GM12878 (cell line): ENCODE measurements at regions of chr19 and their contacts with region 1.

Region 1: DNA sequence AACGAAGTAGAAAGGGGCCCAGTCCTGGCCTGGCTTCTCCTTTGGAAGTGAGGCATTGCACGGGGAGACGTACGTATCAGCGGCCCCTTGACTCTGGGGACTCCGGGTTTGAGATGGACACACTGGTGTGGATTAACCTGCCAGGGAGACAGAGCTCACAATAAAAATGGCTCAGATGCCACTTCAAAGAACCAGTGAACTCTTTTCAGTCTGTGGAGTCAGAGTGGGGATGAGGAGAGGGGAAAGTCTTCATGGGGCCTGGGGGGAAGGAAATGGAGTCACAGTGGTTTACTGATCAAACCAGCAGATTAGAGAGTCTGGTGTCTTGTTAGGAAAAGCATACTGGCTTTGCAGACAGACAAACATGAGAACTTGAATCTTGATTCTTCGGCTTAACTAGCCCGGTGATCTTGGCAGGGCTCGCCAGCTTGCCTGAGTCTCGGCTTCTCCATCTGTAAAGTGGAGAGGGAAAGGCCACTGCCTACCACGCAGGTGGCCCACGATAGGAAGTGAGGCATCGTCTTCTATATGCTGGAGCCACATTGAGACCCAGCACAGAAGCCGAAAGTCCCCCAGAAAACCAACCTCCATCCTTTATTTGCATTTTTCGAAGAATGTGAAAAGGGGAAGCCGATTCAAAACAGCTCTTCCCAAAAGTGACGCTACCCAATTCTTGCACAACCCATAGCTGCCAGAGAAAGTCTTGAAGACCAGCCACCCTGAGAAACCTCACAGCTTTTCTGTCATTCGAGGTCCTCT is at the start of gene FFAR1:
- DNase-seq: peak; percentile 96
- ATAC-seq: peak; percentile 74
- H3K4me3 ChIP-seq: no peak within 1 kb of the TSS; the same call in 1 of the 2 replicates
- H3K27ac ChIP-seq: peak within 1 kb of the TSS; percentile 97
- H3K4me1 ChIP-seq: peaks cover 56% of the 10 kb centered on the region
- H3K27me3 ChIP-seq: no peaks in the 10 kb centered on the region
- CTCF ChIP-seq: no peak
- EP300 ChIP-seq: peak in 1 of 2 experiments; percentile 66; a peak in 2 of 4 replicates
- POLR2A ChIP-seq: peak; percentile 72
- RAD21 ChIP-seq: no peak
- polyA plus RNA-seq, gene FFAR1: 0.05 to 0.07 TPM

Region 2: GRCh38 chr19:35154525-35155406 is 192.6 kb before region 1 on chr19 and contains the start of gene FXYD5:
- CTCF ChIA-PET with region 1: no interaction called
- POLR2A ChIA-PET with region 1: no interaction called
- RAD21 ChIA-PET with region 1: no interaction called
- SMC1A ChIA-PET with region 1: no interaction called
- in situ Hi-C with region 1: no loop called
- intact Hi-C with region 1: no loop called
- DNase-seq: no peak
- ATAC-seq: peak; percentile 86
- H3K4me3 ChIP-seq: peak within 1 kb of the TSS; percentile 98
- H3K27ac ChIP-seq: peak within 1 kb of the TSS; percentile 34
- H3K4me1 ChIP-seq: peaks cover 6% of the 10 kb centered on the region
- H3K27me3 ChIP-seq: peaks cover 0 to 3% of the 10 kb centered on the region in 2 experiments; a peak in 1 of 4 replicates
- CTCF ChIP-seq: no peak
- EP300 ChIP-seq: no peak
- POLR2A ChIP-seq: peak; percentile 74
- RAD21 ChIP-seq: no peak
- polyA plus RNA-seq, gene FXYD5: 30.0 to 50.9 TPM

Region 3: DNA sequence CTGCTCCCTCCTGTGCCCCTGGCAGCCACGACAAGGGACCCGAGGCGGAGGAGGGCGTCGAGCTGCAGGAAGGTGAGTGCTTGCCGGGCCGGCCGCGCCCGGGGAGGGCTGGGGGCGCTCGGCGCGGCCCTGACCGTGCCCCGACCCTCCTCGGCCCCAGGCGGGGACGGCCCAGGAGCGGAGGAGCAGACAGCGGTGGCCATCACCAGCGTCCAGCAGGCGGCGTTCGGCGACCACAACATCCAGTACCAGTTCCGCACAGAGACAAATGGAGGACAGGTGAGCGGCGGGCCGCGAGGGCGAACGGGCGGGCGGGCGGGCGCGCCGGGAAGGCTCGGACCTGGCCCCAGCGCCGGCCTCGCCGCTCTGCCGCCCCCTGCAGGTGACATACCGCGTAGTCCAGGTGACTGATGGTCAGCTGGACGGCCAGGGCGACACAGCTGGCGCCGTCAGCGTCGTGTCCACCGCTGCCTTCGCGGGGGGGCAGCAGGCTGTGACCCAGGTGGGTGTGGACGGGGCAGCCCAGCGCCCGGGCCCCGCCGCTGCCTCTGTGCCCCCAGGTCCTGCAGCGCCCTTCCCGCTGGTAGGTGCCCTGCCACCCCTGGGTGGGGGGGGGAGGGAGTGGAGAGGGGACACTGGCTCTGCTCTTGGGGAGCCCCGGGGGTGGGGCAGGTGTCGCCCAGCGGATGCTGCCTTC is 77.8 kb before region 1 on chr19:
- CTCF ChIA-PET with region 1: interaction called, 12 read pairs
- POLR2A ChIA-PET with region 1: interaction called, 4 read pairs
- RAD21 ChIA-PET with region 1: interaction called, 5 read pairs
- SMC1A ChIA-PET with region 1: interaction called, 7 read pairs
- in situ Hi-C with region 1: no loop called
- intact Hi-C with region 1: loop called (anchors 5 kb)
- DNase-seq: peak; percentile 51
- ATAC-seq: peak; percentile 86
- H3K4me3 ChIP-seq: peak overlapping the region; percentile 71
- H3K27ac ChIP-seq: peak overlapping the region; percentile 83
- H3K4me1 ChIP-seq: peaks cover 17% of the 10 kb centered on the region
- H3K27me3 ChIP-seq: no peaks in the 10 kb centered on the region
- CTCF ChIP-seq: peak; percentile 39 to 66 (median 66)
- EP300 ChIP-seq: no peak
- POLR2A ChIP-seq: peak; percentile 71
- RAD21 ChIP-seq: peak; percentile 70

Region 4: DNA sequence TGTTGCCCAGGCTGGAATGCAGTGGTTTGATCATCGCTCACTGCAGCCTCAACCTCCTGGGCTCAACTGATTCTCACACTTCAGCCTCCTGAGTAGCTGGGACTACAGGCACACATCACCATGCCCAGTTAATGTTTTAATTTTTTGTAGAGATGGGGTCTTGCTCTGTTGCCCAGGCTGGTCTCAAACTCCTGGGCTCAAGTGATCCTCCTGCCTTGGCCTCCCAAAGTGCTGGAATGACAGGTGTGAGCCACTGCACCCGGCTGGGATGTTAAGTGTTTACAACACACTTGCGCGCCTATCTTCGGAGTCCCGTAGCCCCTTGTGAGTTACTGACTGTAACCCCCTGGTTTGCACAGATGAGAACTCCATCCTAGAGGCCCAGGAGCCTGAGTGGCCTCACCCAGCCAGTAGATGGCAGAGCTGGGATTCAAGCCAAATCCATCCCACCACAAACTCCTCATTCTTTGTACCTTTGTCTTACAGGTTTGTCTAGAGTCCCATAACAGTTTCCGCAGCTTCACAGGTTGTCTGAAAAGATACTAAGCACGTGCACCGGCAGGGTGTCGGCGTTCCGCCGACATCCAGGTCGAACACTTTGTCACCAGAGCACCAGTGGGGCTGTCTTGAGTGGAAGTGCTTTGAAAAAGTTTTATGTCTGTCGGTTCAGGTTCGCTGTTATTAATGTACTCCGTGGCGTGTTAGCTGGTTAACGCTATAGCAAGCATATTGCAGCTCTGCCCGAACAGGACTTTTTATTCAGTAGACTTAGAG is 40.7 kb before region 1 on chr19:
- CTCF ChIA-PET with region 1: interaction called, 6 read pairs
- POLR2A ChIA-PET with region 1: no interaction called
- RAD21 ChIA-PET with region 1: interaction called, 6 read pairs
- SMC1A ChIA-PET with region 1: interaction called, 3 read pairs
- in situ Hi-C with region 1: no loop called
- intact Hi-C with region 1: loop called (anchors 5 kb)
- DNase-seq: no peak
- ATAC-seq: peak; percentile 86
- H3K4me3 ChIP-seq: no peak overlapping the region
- H3K27ac ChIP-seq: no peak overlapping the region
- H3K4me1 ChIP-seq: no peaks in the 10 kb centered on the region
- H3K27me3 ChIP-seq: no peaks in the 10 kb centered on the region
- CTCF ChIP-seq: peak; percentile 44 to 65 (median 63); a peak in 5 of 6 replicates
- EP300 ChIP-seq: no peak
- POLR2A ChIP-seq: no peak
- RAD21 ChIP-seq: peak; percentile 41

Region 5: DNA sequence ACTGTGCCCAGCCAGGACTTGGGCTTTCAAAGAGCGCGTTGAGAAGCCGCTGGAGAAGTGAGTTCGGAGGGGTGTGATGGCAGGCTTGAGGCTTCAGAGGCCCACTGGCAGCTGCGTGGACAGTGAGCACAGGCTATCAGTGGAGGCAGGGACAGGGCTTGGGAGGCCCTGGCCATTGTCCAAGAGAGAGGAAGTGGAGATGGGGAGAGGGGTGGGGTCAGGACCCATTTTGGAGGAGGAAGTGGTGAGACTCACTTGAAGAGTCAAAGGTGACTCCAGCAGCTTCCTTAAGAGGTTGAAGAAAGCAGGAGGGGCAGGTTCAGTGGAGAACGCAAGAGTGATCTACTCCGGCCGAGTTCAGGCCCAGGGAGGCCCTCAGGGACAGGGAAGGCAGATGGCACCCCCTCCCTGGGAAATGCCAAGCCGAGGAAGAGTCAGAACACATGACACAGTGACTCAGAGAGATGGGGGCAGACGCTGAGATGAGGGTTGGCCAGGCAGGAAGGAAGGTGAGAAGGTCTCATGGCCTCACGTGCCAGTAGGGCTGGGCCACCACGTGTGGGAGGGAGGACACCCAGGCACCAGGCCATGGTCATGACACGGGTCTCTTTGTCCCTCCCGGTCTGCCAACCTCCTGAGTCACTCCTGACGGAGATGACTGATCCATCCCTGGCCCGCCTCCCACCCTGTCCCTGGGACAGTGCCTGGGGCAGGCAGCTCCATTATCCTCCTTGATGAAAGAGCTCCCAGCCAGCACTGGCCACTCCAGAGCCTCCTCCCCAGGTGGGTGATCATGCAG is 28.5 kb before region 1 on chr19:
- CTCF ChIA-PET with region 1: interaction called, 10 read pairs
- POLR2A ChIA-PET with region 1: interaction called, 30 read pairs
- RAD21 ChIA-PET with region 1: interaction called, 15 read pairs
- SMC1A ChIA-PET with region 1: interaction called, 19 read pairs
- in situ Hi-C with region 1: no loop called
- intact Hi-C with region 1: no loop called
- DNase-seq: no peak
- ATAC-seq: peak; percentile 18; the same call in 1 of the 3 replicates
- H3K4me3 ChIP-seq: no peak overlapping the region
- H3K27ac ChIP-seq: no peak overlapping the region
- H3K4me1 ChIP-seq: peaks cover 27% of the 10 kb centered on the region
- H3K27me3 ChIP-seq: no peaks in the 10 kb centered on the region
- CTCF ChIP-seq: no peak
- EP300 ChIP-seq: no peak
- POLR2A ChIP-seq: no peak
- RAD21 ChIP-seq: no peak

Region 6: DNA sequence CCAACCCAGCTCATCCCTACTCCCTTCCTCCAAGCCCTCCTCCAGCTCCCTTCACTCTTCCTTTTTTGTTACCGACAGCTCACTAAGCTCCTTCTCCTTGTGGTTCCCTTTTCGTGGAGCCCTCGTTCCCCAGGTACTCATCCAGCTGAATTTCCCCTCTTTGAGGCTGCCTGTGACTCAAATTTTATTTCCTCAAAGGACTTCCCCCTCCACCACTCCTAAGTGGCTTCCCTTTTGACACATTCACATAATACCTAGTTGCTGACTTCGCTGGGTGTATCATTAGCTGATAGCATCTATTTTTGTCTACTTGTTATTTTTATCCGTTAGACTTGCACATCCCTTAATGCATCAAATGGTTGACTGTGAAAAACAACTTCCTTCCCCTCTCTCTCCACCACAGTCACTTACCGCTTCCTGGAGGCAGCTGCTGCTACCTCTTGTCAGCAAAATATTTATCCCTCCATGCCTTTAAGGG is 115.2 kb after region 1 on chr19:
- CTCF ChIA-PET with region 1: interaction called, 168 read pairs
- POLR2A ChIA-PET with region 1: interaction called, 35 read pairs
- RAD21 ChIA-PET with region 1: interaction called, 143 read pairs
- SMC1A ChIA-PET with region 1: interaction called, 134 read pairs
- in situ Hi-C with region 1: loop called (anchors 5 kb)
- intact Hi-C with region 1: no loop called
- DNase-seq: peak; percentile 96
- ATAC-seq: peak; percentile 79
- H3K4me3 ChIP-seq: peak overlapping the region; percentile 33; the same call in 1 of the 2 replicates
- H3K27ac ChIP-seq: peak overlapping the region; percentile 73
- H3K4me1 ChIP-seq: peaks cover 56% of the 10 kb centered on the region
- H3K27me3 ChIP-seq: no peaks in the 10 kb centered on the region
- CTCF ChIP-seq: peak in 1 of 3 experiments; percentile 42; a peak in 2 of 6 replicates
- EP300 ChIP-seq: peak; percentile 92 to 97
- POLR2A ChIP-seq: no peak
- RAD21 ChIP-seq: peak; percentile 65

Region 7: DNA sequence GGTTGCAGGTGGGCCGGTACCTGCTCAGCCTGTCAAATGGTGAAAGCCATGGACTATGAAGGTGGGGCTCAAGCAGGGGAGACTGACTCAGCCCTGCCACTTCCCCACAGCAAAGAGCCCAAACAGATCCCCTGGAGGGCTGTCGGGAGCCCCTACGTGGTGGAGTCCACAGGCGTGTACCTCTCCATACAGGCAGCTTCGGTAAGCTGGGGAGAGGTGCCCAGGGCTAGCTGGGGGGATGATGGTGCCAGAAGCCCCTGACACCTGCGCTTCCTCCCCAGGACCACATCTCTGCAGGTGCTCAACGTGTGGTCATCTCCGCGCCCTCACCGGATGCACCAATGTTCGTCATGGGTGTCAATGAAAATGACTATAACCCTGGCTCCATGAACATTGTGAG is 194.9 kb after region 1 on chr19:
- CTCF ChIA-PET with region 1: no interaction called
- POLR2A ChIA-PET with region 1: no interaction called
- RAD21 ChIA-PET with region 1: no interaction called
- SMC1A ChIA-PET with region 1: no interaction called
- in situ Hi-C with region 1: no loop called
- intact Hi-C with region 1: no loop called
- DNase-seq: no peak
- ATAC-seq: no peak
- H3K4me3 ChIP-seq: no peak overlapping the region
- H3K27ac ChIP-seq: no peak overlapping the region
- H3K4me1 ChIP-seq: peaks cover 31% of the 10 kb centered on the region
- H3K27me3 ChIP-seq: no peaks in the 10 kb centered on the region
- CTCF ChIP-seq: no peak
- EP300 ChIP-seq: no peak
- POLR2A ChIP-seq: no peak
- RAD21 ChIP-seq: no peak

Region 8: GRCh38 chr19:35592226-35592625 is 244.9 kb after region 1 on chr19:
- CTCF ChIA-PET with region 1: interaction called, 5 read pairs
- POLR2A ChIA-PET with region 1: no interaction called
- RAD21 ChIA-PET with region 1: interaction called, 3 read pairs
- SMC1A ChIA-PET with region 1: no interaction called
- in situ Hi-C with region 1: no loop called
- intact Hi-C with region 1: loop called (anchors 5 kb)
- DNase-seq: no peak
- ATAC-seq: no peak
- H3K4me3 ChIP-seq: no peak overlapping the region
- H3K27ac ChIP-seq: no peak overlapping the region
- H3K4me1 ChIP-seq: no peaks in the 10 kb centered on the region; the same call in none of the 2 replicates
- H3K27me3 ChIP-seq: no peaks in the 10 kb centered on the region
- CTCF ChIP-seq: peak; percentile 64 to 74 (median 70); a peak in 5 of 6 replicates
- EP300 ChIP-seq: no peak
- POLR2A ChIP-seq: no peak
- RAD21 ChIP-seq: peak; percentile 84